ENCODE measurements at regions of chr12 and their contacts with region 1.

Region 1: GRCh38 chr12:52069327-52070184 is at the start of gene ATG101:
- DNase-seq: peak; percentile 91
- ATAC-seq: peak; percentile 95
- H3K4me3 Mint-ChIP-seq: peak within 1 kb of the TSS; percentile 92
- H3K27ac Mint-ChIP-seq: peak within 1 kb of the TSS; percentile 99
- H3K4me1 Mint-ChIP-seq: peaks cover 47% of the 10 kb centered on the region
- H3K27me3 Mint-ChIP-seq: peaks cover 1% of the 10 kb centered on the region
- CTCF ChIP-seq: peak; percentile 50
- total RNA-seq, gene ATG101: 25.6 to 28.4 TPM

Region 2: DNA sequence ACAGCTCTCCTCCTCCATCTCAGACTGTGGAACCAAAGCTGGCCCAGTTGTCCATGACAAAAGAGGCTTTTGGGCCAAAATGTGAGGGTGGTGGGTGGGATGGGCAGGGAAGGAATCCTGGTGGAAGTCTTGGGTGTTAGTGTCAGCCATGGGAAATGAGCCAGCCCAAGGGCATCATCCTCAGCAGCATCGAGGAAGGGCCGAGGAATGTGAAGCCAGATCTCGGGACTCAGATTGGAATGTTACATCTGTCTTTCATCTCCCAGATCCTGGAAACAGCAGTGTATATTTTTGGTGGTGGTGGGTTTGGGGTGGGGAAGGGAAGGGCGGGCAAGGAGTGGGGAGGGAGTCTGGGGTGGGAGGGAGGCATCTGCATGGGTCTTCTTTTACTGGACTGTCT is 74.6 kb before region 1 on chr12:
- CTCF ChIA-PET with region 1: interaction called, 11 read pairs
- POLR2A ChIA-PET with region 1: no interaction called
- intact Hi-C with region 1: no loop called
- DNase-seq: no peak
- ATAC-seq: no peak
- H3K4me3 Mint-ChIP-seq: no peak overlapping the region
- H3K27ac Mint-ChIP-seq: no peak overlapping the region
- H3K4me1 Mint-ChIP-seq: peaks cover 12% of the 10 kb centered on the region
- H3K27me3 Mint-ChIP-seq: no peaks in the 10 kb centered on the region
- CTCF ChIP-seq: no peak

Region 3: GRCh38 chr12:52032804-52033502 is 36.6 kb before region 1 on chr12:
- CTCF ChIA-PET with region 1: interaction called, 602 read pairs
- POLR2A ChIA-PET with region 1: interaction called, 5 read pairs
- intact Hi-C with region 1: loop called (anchors 5 kb)
- DNase-seq: peak; percentile 96
- ATAC-seq: peak; percentile 93
- H3K4me3 Mint-ChIP-seq: peak overlapping the region; percentile 75
- H3K27ac Mint-ChIP-seq: peak overlapping the region; percentile 88
- H3K4me1 Mint-ChIP-seq: peaks cover 41% of the 10 kb centered on the region
- H3K27me3 Mint-ChIP-seq: no peaks in the 10 kb centered on the region
- CTCF ChIP-seq: no peak

Region 4: DNA sequence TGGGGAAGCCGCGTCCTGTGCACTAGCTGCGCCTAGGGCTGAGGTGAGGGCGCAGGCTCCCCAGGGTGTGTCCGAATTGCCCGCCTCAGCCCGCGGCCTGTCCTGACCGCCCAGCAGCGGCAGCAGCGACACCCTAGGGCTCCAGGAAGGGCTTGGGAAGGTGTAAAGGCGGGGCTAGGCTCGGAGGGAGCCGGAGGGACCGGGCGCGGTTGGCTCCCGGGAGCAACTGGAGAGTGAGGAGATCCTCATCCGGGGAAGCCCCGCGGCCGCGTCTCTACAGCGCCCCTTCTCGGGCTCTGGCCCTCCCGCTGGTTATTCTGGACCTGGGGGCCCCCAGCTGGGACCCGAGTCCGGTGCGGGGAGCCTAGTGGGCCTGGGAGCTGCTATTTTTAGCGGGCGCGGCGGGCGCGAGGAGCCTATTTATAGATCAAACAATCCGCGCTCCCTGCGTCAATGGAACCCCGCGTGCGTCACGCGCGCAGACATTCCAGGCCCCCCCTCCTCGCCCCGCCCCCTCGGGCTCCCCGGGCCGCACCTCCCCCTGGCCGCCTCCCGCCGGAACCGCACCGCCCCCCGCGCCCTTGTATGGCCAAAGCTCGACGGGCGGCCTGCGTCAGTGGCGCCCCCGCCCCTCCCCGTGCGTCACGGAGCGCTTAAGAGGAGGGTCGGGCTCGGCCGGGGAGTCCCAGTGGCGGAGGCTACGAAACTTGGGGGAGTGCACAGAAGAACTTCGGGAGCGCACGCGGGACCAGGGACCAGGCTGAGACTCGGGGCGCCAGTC is 18.6 kb before region 1 on chr12 and contains the start of gene NR4A1:
- CTCF ChIA-PET with region 1: interaction called, 8 read pairs
- POLR2A ChIA-PET with region 1: interaction called, 15 read pairs
- intact Hi-C with region 1: no loop called
- DNase-seq: peak; percentile 99
- ATAC-seq: peak; percentile 93
- H3K4me3 Mint-ChIP-seq: peak within 1 kb of the TSS; percentile 95
- H3K27ac Mint-ChIP-seq: peak within 1 kb of the TSS; percentile 93
- H3K4me1 Mint-ChIP-seq: peaks cover 39% of the 10 kb centered on the region
- H3K27me3 Mint-ChIP-seq: no peaks in the 10 kb centered on the region
- CTCF ChIP-seq: no peak
- total RNA-seq, gene NR4A1: 120 to 128 TPM

Region 5: DNA sequence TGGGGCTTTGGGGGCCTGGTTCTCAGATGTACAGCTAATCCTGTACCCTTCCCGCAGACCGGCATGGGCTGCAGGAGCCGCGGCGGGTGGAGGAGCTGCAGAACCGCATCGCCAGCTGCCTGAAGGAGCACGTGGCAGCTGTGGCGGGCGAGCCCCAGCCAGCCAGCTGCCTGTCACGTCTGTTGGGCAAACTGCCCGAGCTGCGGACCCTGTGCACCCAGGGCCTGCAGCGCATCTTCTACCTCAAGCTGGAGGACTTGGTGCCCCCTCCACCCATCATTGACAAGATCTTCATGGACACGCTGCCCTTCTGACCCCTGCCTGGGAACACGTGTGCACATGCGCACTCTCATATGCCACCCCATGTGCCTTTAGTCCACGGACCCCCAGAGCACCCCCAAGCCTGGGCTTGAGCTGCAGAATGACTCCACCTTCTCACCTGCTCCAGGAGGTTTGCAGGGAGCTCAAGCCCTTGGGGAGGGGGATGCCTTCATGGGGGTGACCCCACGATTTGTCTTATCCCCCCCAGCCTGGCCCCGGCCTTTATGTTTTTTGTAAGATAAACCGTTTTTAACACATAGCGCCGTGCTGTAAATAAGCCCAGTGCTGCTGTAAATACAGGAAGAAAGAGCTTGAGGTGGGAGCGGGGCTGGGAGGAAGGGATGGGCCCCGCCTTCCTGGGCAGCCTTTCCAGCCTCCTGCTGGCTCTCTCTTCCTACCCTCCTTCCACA is 10.8 kb before region 1 on chr12:
- CTCF ChIA-PET with region 1: interaction called, 11 read pairs
- POLR2A ChIA-PET with region 1: interaction called, 3 read pairs
- intact Hi-C with region 1: no loop called
- DNase-seq: no peak
- ATAC-seq: no peak
- H3K4me3 Mint-ChIP-seq: no peak overlapping the region
- H3K27ac Mint-ChIP-seq: no peak overlapping the region
- H3K4me1 Mint-ChIP-seq: peaks cover 6% of the 10 kb centered on the region
- H3K27me3 Mint-ChIP-seq: no peaks in the 10 kb centered on the region
- CTCF ChIP-seq: no peak

Region 6: DNA sequence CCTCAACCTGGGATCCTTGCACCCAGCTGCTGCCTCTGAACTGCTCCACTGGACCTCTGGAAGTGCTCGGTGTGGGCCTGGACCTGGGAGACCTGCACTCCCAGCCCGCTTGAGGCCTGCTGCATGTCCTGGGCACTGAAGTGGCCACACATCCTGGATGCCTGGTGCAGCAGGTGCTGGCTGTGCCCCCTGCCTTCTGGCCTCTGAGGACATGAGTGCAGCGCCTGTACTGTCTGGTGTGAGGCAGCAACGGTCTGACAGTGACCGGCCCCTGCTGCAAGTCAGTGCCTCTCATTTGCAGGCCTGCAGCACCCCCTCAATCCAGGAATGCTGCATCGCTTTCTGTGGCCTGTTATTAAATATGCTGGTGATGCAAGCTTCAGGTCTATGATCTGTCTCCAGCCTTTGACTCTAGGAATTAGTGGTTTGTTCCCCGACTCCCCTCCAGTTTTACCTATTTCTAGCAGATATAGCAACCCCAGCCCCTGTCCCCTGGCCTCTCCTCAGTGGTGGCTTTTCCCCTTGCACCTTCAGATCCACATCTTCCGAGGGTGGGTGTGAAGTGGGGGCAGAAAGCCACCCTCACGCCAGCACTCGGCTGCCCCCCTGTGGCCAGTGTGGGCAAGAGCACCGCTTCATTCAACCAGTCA is 13.6 kb after region 1 on chr12:
- CTCF ChIA-PET with region 1: interaction called, 36 read pairs
- POLR2A ChIA-PET with region 1: interaction called, 9 read pairs
- intact Hi-C with region 1: no loop called
- DNase-seq: peak; percentile 73
- ATAC-seq: peak; percentile 92
- H3K4me3 Mint-ChIP-seq: no peak overlapping the region
- H3K27ac Mint-ChIP-seq: no peak overlapping the region
- H3K4me1 Mint-ChIP-seq: peaks cover 9% of the 10 kb centered on the region
- H3K27me3 Mint-ChIP-seq: peaks cover 8% of the 10 kb centered on the region
- CTCF ChIP-seq: peak; percentile 97